Left lung (tissue), 14 donors: ENCODE measurements at regions of chr2 and their contacts with region 1.

Region 1: DNA sequence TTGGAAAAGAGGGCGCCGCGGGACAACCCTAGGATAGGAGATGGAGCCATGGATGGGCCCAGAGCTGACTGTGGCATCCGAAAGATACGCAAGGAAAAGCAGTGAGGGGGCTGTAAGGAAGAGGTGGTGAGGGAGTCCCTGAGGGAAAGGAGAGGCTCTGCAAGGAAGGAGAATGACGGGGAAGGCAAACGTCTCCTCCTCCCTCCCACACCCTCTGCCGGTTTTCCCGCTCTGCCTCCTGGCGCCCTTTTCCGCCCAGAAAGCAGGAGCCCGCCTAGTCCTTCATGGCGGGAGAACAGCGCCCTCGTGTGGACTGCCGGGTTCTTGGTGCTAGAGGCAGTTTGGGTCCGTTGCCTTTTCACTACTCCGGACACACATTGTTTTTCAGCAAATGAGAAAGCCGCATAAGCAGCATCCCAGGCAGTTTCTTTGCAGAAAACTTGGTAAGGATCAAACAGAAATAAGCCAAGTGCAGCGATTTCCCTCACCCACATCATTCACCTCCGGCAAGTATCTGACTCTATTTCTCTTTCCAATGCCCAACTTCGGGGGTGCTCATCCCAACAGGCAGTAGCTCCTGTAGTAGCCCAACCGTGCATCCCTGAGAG is 200.4 kb downstream of the INO80D start:
- DNase-seq: peak; percentile 46 to 92 (median 84)
- ATAC-seq: peak; percentile 98
- H3K4me3 ChIP-seq: no peak overlapping the region
- H3K27ac ChIP-seq: no peak overlapping the region
- H3K4me1 ChIP-seq: peaks cover 0 to 4% of the 10 kb centered on the region in 2 donors
- H3K27me3 ChIP-seq: no peaks in the 10 kb centered on the region
- CTCF ChIP-seq: peak; percentile 80 to 91

Region 2: GRCh38 chr2:205766779-205767359 is 118.7 kb before region 1 on chr2:
- intact Hi-C with region 1: loop called in 1 of 2 experiments (anchors 10 kb)
- DNase-seq: peak in 1 of 4 donors; percentile 81
- ATAC-seq: peak; percentile 53
- H3K4me3 ChIP-seq: no peak overlapping the region
- H3K27ac ChIP-seq: peak overlapping the region in 1 of 2 donors; percentile 5
- H3K4me1 ChIP-seq: peaks cover 20 to 59% of the 10 kb centered on the region in 2 donors
- H3K27me3 ChIP-seq: peaks cover 0 to 7% of the 10 kb centered on the region in 2 donors
- CTCF ChIP-seq: peak; percentile 78 to 87